Panc1 (cell line): ENCODE measurements at regions of chr4 and their contacts with region 1.

Region 1: DNA sequence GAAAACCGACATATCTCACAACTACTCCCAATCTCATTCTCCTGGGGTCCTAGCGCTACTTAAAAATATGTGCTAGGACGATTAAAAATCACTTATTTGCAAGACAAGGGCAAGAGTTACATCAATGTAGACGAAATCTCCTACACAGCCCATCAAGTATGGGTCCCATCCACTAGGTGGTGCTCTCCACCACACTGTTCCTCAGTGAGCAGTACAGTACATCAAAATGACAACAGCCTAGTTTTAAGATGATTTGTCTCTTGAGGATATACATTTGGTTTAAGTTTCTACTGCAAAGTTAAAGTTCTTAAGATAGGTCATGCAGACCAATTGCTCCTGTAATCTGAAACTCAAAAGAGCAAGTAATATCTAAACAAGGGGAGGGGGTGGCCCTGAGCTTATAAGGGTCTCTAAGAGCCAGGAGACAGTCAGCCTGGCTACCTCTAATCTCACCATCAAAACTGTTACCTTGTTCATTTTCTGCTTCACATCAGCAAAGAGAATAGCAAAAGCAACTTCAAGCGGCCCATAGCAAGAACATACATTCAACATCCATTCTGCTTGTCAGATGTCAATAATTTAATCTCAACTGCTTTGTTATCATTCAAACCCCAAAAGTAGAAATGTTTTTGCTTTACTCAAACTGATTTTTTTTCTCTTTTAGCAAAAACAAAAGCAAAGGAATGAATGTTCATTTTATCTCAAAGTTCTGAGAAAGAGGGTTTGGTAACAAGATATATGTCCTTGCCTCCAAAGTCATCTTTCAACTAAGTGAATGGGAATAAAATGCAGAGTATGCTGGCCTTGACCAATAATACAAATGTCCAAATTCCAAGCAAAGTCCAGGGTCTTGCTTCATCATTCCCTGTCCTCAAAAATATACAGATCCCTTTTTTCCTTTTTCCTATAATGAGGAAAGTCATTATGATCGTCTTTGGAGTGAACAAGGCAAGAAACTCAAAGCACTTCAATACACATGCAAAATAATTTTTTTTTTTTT is 53.1 kb downstream of the STX18 start:
- DNase-seq: peak; percentile 60
- ATAC-seq: peak; percentile 98
- H3K4me3 ChIP-seq: no peak overlapping the region
- H3K27ac ChIP-seq: no peak overlapping the region
- H3K4me1 ChIP-seq: peaks cover 6% of the 10 kb centered on the region
- H3K27me3 ChIP-seq: no peaks in the 10 kb centered on the region
- CTCF ChIP-seq: peak; percentile 83

Region 2: DNA sequence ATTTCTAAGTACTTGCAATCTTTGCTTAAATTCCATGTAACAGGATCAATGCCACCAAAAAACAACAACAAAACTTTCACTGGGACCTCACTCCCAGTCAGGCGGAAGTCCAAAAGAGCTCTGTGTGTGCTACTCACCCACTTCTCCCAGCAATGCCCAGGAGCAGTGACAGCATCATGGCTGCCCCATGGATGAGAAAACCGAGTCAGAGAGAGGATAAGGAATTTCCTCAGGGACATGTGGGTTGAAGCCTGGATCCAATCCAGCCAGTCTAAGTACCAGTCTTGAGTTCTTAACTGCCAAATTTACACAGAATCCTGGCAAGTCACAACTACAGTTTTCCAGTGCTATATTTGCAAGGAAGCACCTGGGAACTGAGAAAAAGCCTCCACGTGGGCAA is 11.3 kb before region 1 on chr4:
- CTCF ChIA-PET with region 1: no interaction called
- POLR2A ChIA-PET with region 1: no interaction called
- in situ Hi-C with region 1: no loop called
- intact Hi-C with region 1: no loop called
- DNase-seq: no peak
- ATAC-seq: no peak
- H3K4me3 ChIP-seq: no peak overlapping the region
- H3K27ac ChIP-seq: no peak overlapping the region
- H3K4me1 ChIP-seq: no peaks in the 10 kb centered on the region
- H3K27me3 ChIP-seq: no peaks in the 10 kb centered on the region
- CTCF ChIP-seq: no peak

Region 3: GRCh38 chr4:4859843-4860802 is 371.4 kb after region 1 on chr4:
- CTCF ChIA-PET with region 1: no interaction called
- POLR2A ChIA-PET with region 1: no interaction called
- in situ Hi-C with region 1: no loop called
- intact Hi-C with region 1: loop called (anchors 10 kb)
- DNase-seq: no peak
- ATAC-seq: peak; percentile 68
- H3K4me3 ChIP-seq: peak overlapping the region; percentile 59 to 88
- H3K27ac ChIP-seq: no peak overlapping the region
- H3K4me1 ChIP-seq: peaks cover 4% of the 10 kb centered on the region; the same call in 1 of the 2 replicates
- H3K27me3 ChIP-seq: no peaks in the 10 kb centered on the region; the same call in 1 of the 2 replicates
- CTCF ChIP-seq: no peak

Region 4: DNA sequence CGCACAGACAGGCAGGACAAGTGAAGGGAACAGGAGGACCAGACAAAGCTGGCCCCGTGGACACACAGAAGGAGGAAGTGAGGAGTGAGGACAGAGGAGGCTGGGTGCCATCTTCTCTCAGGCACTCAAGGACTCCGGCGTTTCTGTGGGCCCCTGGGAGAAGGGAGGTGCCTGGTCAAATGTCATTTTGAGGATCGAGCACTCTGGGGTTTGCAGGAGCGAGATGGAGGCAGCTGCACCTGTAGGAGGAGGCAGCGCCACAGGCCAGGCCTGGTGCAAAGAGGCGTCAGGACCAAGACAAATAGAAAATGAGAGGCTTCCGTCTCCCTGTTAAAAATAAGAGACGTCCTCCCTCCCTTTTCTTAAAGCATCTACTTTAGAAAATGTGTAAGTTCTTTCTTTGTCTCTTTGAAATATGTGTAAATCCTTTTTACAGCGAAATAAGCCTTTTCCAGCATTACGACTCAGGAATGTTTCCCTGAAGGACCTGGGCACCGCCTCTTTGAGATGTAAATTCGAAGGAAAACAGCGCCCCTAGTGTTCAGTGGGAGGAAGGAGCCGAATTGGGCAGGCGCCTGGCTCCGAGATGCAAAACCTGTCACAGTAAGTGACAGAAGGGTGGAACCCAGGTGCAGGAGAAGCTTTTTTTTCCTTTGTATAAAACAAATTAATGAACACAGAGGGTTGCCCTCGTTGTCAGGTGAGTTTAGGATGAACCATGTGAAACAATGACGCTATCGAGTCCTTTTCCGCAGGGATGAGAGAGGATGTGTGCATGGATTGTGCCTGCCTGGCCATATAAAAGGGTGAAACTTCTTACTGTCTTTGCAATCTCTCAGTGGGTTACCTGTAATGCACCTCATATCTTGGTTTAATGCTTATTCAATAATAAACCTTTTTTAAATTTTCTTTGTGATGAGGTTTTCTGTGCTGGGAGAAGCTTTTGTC is 1530.9 kb after region 1 on chr4:
- CTCF ChIA-PET with region 1: no interaction called
- POLR2A ChIA-PET with region 1: no interaction called
- in situ Hi-C with region 1: no loop called
- intact Hi-C with region 1: no loop called
- DNase-seq: peak; percentile 20
- ATAC-seq: peak; percentile 69; the same call in 1 of the 2 replicates
- H3K4me3 ChIP-seq: no peak overlapping the region
- H3K27ac ChIP-seq: no peak overlapping the region
- H3K4me1 ChIP-seq: no peaks in the 10 kb centered on the region
- H3K27me3 ChIP-seq: no peaks in the 10 kb centered on the region; the same call in 1 of the 2 replicates
- CTCF ChIP-seq: peak; percentile 90